ENCODE measurements at regions of chr19 and their contacts with region 1.

Region 1: GRCh38 chr19:51422053-51422448 is 4.6 kb upstream of the SIGLEC10 start:
- DNase-seq: peak; percentile 89 to 92
- ATAC-seq: peak; percentile 94 to 98 (median 95)
- H3K4me3 ChIP-seq: no peak overlapping the region
- H3K4me3 Mint-ChIP-seq: peak overlapping the region; percentile 74
- H3K27ac ChIP-seq: no peak overlapping the region
- H3K27ac Mint-ChIP-seq: peak overlapping the region in 1 of 2 donors; percentile 38
- H3K4me1 ChIP-seq: peaks cover 34% of the 10 kb centered on the region
- H3K4me1 Mint-ChIP-seq: peaks cover 15 to 20% of the 10 kb centered on the region in 2 donors
- H3K27me3 ChIP-seq: peaks cover 5% of the 10 kb centered on the region
- H3K27me3 Mint-ChIP-seq: peaks cover 16 to 17% of the 10 kb centered on the region in 2 donors
- CTCF ChIP-seq: peak; percentile 99

Region 2: DNA sequence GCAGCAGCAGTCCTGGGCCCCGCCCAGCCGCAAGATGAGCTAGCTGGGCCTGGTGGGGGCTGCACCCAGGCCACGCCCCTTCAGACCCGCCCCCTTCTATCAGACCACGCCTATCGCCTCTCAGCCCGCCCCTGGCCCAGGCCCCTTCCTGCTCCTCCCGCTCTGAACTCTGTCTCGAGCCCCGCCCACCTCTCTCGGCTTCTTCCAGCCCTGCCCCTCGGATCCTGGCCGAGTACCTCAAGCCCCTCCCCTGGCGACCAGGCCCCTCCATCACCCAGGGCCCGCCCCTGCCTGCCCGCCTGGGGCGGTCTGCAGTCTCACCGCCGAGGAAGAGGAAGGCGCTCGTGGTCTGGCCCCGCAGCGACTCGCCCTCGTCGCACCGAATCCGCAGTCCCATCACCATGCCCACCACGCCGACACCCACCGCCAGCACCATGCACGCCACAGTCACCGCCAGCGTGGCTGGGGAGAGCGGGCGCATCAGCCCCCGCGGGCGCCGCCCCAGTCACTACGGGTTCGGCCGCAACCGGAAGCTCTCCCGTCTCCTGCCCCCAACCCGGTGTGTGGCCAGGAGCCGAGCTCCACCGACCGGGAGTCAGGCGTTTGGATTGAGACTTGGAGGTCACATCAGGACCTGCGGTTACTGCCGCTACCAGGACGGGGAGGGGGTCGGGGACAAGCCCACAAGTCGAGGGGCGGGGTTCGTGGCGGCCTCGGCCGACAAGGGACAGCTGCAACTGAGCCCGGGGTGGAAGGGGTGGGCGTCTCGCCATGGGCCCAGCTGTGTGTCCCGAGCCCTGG is 54.3 kb before region 1 on chr19:
- intact Hi-C with region 1: no loop called
- DNase-seq: peak; percentile 94 to 95
- ATAC-seq: peak; percentile 68 to 92 (median 69)
- H3K4me3 ChIP-seq: peak overlapping the region; percentile 95
- H3K4me3 Mint-ChIP-seq: peak overlapping the region; percentile 98
- H3K27ac ChIP-seq: peak overlapping the region; percentile 88
- H3K27ac Mint-ChIP-seq: peak overlapping the region; percentile 88 to 94
- H3K4me1 ChIP-seq: peaks cover 82% of the 10 kb centered on the region
- H3K4me1 Mint-ChIP-seq: peaks cover 54 to 80% of the 10 kb centered on the region in 2 donors
- H3K27me3 ChIP-seq: no peaks in the 10 kb centered on the region
- H3K27me3 Mint-ChIP-seq: no peaks in the 10 kb centered on the region
- CTCF ChIP-seq: no peak

Region 3: DNA sequence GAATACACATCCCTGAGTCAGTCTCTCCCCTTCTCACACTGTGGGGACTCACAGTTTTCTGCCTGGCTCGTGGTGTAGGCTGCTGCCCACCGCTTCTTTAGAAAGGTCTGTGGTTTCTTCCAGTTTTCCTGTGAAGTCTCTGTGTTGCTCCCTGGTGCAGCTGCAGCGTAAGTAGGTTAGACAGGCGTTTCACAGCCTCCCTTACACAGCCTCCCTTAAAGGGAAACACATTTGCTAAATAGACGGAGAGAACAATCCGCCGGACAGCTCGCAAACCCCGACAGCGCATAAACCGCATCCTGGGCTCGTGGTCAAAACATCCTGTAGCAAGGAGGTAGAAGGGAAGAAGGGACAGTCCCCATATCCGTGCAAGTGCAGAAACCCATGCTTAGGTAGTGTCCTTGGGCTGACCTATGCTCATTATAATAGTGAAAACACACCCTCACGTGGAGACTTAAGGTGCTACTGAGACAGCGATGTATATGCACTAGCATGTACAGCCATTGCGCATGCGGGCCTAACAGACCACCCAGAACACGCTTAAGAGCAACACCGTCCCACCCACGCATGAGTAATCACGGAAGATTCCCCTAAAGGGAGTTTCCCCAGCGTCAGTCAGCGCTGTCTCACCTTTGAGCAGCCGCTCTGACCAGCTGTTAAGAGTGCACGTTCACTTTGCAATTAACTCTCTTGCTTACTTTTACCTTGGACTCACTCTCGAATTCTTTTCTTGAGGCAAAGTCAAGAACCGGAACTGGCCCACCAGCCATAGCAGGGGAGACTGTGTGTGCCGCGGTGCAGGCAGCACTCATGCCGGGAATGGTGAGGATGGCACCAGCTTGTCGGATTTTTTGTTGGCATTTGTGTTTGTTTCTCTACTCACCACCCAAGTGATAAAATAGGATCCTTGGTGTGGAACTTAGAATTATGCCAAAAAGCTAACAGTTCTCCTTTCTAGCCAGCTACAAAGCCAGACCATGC is 19.6 kb after region 1 on chr19:
- intact Hi-C with region 1: loop called (anchors 2 kb)
- DNase-seq: peak; percentile 72 to 91
- ATAC-seq: peak; percentile 81 to 92 (median 81)
- H3K4me3 ChIP-seq: peak overlapping the region; percentile 9
- H3K4me3 Mint-ChIP-seq: peak overlapping the region; percentile 90
- H3K27ac ChIP-seq: peak overlapping the region; percentile 68
- H3K27ac Mint-ChIP-seq: peak overlapping the region; percentile 91 to 92
- H3K4me1 ChIP-seq: peaks cover 38% of the 10 kb centered on the region
- H3K4me1 Mint-ChIP-seq: peaks cover 41 to 45% of the 10 kb centered on the region in 2 donors
- H3K27me3 ChIP-seq: peaks cover 4% of the 10 kb centered on the region
- H3K27me3 Mint-ChIP-seq: peaks cover 8 to 16% of the 10 kb centered on the region in 2 donors
- CTCF ChIP-seq: no peak

Region 4: DNA sequence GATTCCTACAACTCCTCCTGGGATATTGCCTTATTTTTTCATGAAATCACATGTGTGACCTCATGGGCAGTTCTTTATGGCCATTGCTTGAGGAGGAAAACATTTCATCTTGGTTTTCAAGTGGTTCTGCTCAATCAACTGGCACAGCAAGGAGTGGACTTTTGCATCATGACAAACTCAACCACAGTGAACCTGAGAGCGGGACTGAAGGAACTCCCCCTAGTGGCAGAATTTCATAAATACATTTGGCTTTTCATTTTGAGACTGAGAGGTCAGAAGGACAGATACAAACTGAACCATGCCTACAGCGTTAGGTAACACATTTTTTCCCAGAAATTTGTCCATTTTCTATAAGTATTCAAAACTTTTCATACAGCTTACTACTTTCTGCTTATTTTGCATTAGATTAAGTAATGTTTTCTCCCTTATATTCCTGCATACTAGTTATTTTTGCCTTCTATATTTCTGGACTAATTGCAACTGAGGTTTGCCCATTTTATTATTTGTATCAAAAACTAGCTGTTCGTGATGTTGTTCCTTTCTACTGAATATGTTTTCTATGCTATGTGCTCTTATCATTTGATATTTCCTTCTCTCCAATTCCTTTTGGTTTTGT is 92.9 kb after region 1 on chr19:
- intact Hi-C with region 1: loop called (anchors 1 kb)
- DNase-seq: peak in 1 of 2 donors; percentile 73
- ATAC-seq: peak; percentile 60 to 76 (median 63)
- H3K4me3 ChIP-seq: no peak overlapping the region
- H3K4me3 Mint-ChIP-seq: no peak overlapping the region
- H3K27ac ChIP-seq: no peak overlapping the region
- H3K27ac Mint-ChIP-seq: no peak overlapping the region
- H3K4me1 ChIP-seq: no peaks in the 10 kb centered on the region
- H3K4me1 Mint-ChIP-seq: no peaks in the 10 kb centered on the region
- H3K27me3 ChIP-seq: peaks cover 3% of the 10 kb centered on the region
- H3K27me3 Mint-ChIP-seq: peaks cover 15 to 31% of the 10 kb centered on the region in 2 donors
- CTCF ChIP-seq: peak; percentile 79

Region 5: DNA sequence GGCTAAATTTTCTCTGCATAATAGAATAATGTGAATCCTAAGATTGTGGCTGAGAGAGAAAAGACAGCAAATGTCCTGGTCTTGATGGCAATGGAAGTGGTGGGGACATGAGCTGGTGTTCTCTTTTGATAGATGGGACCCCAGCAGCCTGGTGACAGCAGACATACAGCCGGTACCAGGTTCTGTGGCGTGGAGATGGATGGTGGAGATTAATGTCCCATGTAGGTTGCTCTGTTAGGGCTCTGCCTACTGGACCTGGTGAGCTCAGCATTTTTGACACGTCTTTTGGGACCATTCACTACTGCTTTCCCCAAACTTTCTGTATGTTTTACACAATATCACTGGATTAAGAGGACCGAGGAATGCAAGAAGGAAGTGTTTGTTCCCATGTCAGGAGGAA is 232.7 kb after region 1 on chr19:
- intact Hi-C with region 1: loop called (anchors 5 kb)
- DNase-seq: no peak
- ATAC-seq: no peak
- H3K4me3 ChIP-seq: no peak overlapping the region
- H3K4me3 Mint-ChIP-seq: no peak overlapping the region
- H3K27ac ChIP-seq: no peak overlapping the region
- H3K27ac Mint-ChIP-seq: no peak overlapping the region
- H3K4me1 ChIP-seq: peaks cover 14% of the 10 kb centered on the region
- H3K4me1 Mint-ChIP-seq: peaks cover 7% of the 10 kb centered on the region in 2 donors
- H3K27me3 ChIP-seq: no peaks in the 10 kb centered on the region
- H3K27me3 Mint-ChIP-seq: peaks cover 28 to 40% of the 10 kb centered on the region in 2 donors
- CTCF ChIP-seq: no peak

Measured in natural killer cell (primary cell).